ENCODE measurements at regions of chr21 and their contacts with region 1.

Region 1: DNA sequence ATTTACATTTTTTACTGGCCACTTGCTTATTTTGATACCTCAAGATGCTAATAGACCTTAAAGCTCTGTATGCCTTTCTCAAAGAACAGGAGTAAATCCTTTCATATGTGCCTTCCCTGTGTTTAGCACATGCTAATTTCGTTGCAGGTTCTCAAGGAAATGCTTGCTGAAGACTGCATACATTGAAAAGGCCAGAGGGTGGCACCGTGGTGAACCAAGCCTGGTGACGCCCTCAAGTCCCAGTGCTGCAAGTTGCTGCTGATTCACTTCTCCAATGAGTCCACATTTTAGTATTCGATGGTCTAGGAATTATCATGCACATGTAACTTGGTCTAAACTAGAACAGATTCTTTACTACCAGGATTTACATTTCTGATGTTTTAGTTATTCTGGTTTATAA is 94.1 kb downstream of the CLDN17 start:
- DNase-seq: peak; percentile 66
- H3K4me3 ChIP-seq: no peak overlapping the region
- H3K27ac ChIP-seq: no peak overlapping the region
- H3K4me1 ChIP-seq: no peaks in the 10 kb centered on the region
- H3K27me3 ChIP-seq: no peaks in the 10 kb centered on the region
- CTCF ChIP-seq: peak; percentile 67 to 78

Region 2: GRCh38 chr21:30257773-30258172 is 185.3 kb after region 1 on chr21:
- CTCF ChIA-PET with region 1: no interaction called
- dilution Hi-C with region 1: no loop called
- in situ Hi-C with region 1: no loop called
- intact Hi-C with region 1: loop called (anchors 1 kb)
- DNase-seq: peak; percentile 66
- H3K4me3 ChIP-seq: no peak overlapping the region
- H3K27ac ChIP-seq: no peak overlapping the region
- H3K4me1 ChIP-seq: no peaks in the 10 kb centered on the region
- H3K27me3 ChIP-seq: no peaks in the 10 kb centered on the region
- CTCF ChIP-seq: peak; percentile 55 to 64

Region 3: DNA sequence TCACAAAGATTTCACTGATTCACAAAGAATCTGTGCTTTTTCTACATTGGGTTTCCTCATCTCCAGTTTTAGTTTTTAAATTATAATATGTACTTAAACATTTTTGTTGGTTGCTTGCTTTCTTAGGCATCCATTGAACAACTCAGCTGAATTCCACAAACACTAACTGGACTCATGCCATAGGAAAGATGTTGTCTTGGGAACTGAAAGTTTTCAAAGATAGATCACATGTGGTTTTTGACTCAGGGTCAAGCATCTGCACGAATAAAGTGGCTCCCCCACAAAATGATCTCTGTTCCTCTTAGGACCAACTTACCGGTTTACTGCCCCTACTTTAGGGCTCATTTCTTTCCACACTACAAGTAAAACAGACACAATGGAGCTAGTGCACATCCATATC is 685.8 kb after region 1 on chr21:
- CTCF ChIA-PET with region 1: no interaction called
- dilution Hi-C with region 1: no loop called
- in situ Hi-C with region 1: no loop called
- intact Hi-C with region 1: no loop called
- DNase-seq: no peak
- H3K4me3 ChIP-seq: no peak overlapping the region
- H3K27ac ChIP-seq: no peak overlapping the region
- H3K4me1 ChIP-seq: no peaks in the 10 kb centered on the region
- H3K27me3 ChIP-seq: no peaks in the 10 kb centered on the region
- CTCF ChIP-seq: no peak

Region 4: GRCh38 chr21:30769724-30770431 is 697.4 kb after region 1 on chr21:
- CTCF ChIA-PET with region 1: no interaction called
- dilution Hi-C with region 1: no loop called
- in situ Hi-C with region 1: no loop called
- intact Hi-C with region 1: no loop called
- DNase-seq: peak; percentile 69
- H3K4me3 ChIP-seq: no peak overlapping the region
- H3K27ac ChIP-seq: no peak overlapping the region
- H3K4me1 ChIP-seq: no peaks in the 10 kb centered on the region
- H3K27me3 ChIP-seq: no peaks in the 10 kb centered on the region
- CTCF ChIP-seq: no peak

Measured in mammary epithelial cell (primary cell).